CD4-positive, alpha-beta memory T cell (primary cell): ENCODE measurements at regions of chr6 and their contacts with region 1.

Region 1: DNA sequence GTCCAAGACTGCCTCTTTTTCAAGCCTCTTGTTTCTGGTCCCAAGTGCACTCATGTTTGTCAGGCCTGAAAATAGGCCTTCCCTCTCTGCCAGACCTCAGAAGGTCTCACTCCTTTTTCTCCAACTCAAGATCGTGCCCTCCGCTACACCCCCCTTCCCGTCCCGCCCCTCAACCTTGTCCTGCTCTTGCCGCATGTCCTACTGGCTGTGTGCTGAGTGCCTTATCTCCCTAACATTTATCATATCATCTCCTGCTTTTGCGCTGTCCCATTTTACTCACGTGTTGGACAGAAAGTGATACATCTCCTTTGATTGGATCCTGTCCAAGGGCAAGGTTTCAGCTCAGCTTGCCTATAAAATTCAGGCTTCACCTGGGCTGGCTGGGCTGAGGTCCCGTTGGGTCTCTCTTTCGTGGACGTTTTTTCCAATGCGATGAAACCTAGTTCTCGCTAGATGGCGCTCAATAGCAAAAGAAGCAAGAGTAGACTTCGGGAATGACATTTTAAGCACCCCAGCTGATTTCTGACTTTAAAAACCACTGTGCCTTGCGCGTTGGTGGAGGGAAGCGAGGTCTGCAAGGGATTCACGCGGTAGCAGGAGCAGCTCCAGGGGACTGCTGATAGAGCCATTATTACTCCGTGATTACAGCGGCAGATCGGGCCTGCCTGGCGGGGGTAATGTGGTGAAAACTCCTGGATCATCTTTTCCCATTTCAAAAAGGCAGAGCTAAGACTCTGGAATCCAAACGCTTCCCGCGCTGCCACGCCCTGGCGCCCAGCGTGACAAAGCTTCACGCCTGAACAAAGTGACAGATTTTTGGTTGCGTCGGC is 137.6 kb downstream of the IMPG1 start:
- DNase-seq: peak in 4 of 5 donors; percentile 26 to 30 (median 28)
- H3K4me3 ChIP-seq: no peak overlapping the region
- H3K4me3 Mint-ChIP-seq: peak overlapping the region; percentile 50 to 90 (median 78)
- H3K27ac ChIP-seq: no peak overlapping the region
- H3K27ac Mint-ChIP-seq: no peak overlapping the region
- H3K4me1 ChIP-seq: peaks cover 9% of the 10 kb centered on the region
- H3K4me1 Mint-ChIP-seq: peaks cover 4 to 10% (median 7%) of the 10 kb centered on the region in 4 donors
- H3K27me3 ChIP-seq: no peaks in the 10 kb centered on the region
- H3K27me3 Mint-ChIP-seq: peaks cover 6 to 10% of the 10 kb centered on the region in 2 donors

Region 2: DNA sequence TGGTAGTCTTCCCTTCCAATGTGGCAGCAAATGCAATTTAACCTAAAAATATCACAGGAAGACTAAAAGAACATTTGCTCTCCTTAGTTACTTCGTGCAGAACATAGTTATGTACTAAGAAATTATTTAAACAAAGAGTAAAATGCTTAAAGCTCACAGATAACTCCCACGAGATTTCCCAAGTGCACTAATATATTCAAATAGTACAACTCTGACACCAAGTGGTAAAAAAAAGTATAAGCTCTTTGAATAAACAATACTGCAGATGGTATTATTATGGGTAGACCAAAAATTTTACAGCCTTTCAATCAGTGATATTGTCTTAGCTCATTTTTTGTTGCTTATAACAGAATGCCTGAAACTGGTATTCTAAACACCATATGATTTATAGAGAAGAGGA is 388.5 kb before region 1 on chr6:
- CTCF ChIA-PET with region 1: no interaction called
- POLR2A ChIA-PET with region 1: no interaction called
- intact Hi-C with region 1: no loop called
- DNase-seq: peak in 1 of 5 donors; percentile 3
- H3K4me3 ChIP-seq: no peak overlapping the region
- H3K4me3 Mint-ChIP-seq: no peak overlapping the region
- H3K27ac ChIP-seq: no peak overlapping the region
- H3K27ac Mint-ChIP-seq: no peak overlapping the region
- H3K4me1 ChIP-seq: no peaks in the 10 kb centered on the region
- H3K4me1 Mint-ChIP-seq: peaks cover 0 to 2% (median 0%) of the 10 kb centered on the region in 4 donors
- H3K27me3 ChIP-seq: no peaks in the 10 kb centered on the region
- H3K27me3 Mint-ChIP-seq: peaks cover 0 to 5% of the 10 kb centered on the region in 2 donors

Region 3: GRCh38 chr6:75946146-75946831 is 11.4 kb after region 1 on chr6:
- CTCF ChIA-PET with region 1: interaction called, 10 read pairs
- POLR2A ChIA-PET with region 1: no interaction called
- intact Hi-C with region 1: no loop called
- DNase-seq: no peak
- H3K4me3 ChIP-seq: no peak overlapping the region
- H3K4me3 Mint-ChIP-seq: no peak overlapping the region
- H3K27ac ChIP-seq: no peak overlapping the region
- H3K27ac Mint-ChIP-seq: no peak overlapping the region
- H3K4me1 ChIP-seq: no peaks in the 10 kb centered on the region
- H3K4me1 Mint-ChIP-seq: no peaks in the 10 kb centered on the region
- H3K27me3 ChIP-seq: no peaks in the 10 kb centered on the region
- H3K27me3 Mint-ChIP-seq: peaks cover 0 to 10% of the 10 kb centered on the region in 2 donors

Region 4: GRCh38 chr6:76043690-76044089 is 108.8 kb after region 1 on chr6:
- CTCF ChIA-PET with region 1: no interaction called
- POLR2A ChIA-PET with region 1: no interaction called
- intact Hi-C with region 1: no loop called
- DNase-seq: no peak
- H3K4me3 ChIP-seq: no peak overlapping the region
- H3K4me3 Mint-ChIP-seq: no peak overlapping the region
- H3K27ac ChIP-seq: no peak overlapping the region
- H3K27ac Mint-ChIP-seq: no peak overlapping the region
- H3K4me1 ChIP-seq: no peaks in the 10 kb centered on the region
- H3K4me1 Mint-ChIP-seq: no peaks in the 10 kb centered on the region
- H3K27me3 ChIP-seq: no peaks in the 10 kb centered on the region
- H3K27me3 Mint-ChIP-seq: no peaks in the 10 kb centered on the region